ENCODE measurements at regions of chr12 and their contacts with region 1.

Region 1: GRCh38 chr12:75480469-75480949 is at the start of gene GLIPR1:
- DNase-seq: peak; percentile 46 to 91 (median 66)
- ATAC-seq: peak; percentile 74
- H3K4me3 ChIP-seq: peak within 1 kb of the TSS; percentile 65
- H3K4me3 Mint-ChIP-seq: peak within 1 kb of the TSS; percentile 95
- H3K27ac ChIP-seq: peak within 1 kb of the TSS; percentile 76 to 77
- H3K27ac Mint-ChIP-seq: peak within 1 kb of the TSS; percentile 95
- H3K4me1 ChIP-seq: peaks cover 48% of the 10 kb centered on the region
- H3K4me1 Mint-ChIP-seq: peaks cover 85% of the 10 kb centered on the region
- H3K27me3 ChIP-seq: no peaks in the 10 kb centered on the region
- H3K27me3 Mint-ChIP-seq: no peaks in the 10 kb centered on the region
- CTCF ChIP-seq: no peak
- total RNA-seq, gene GLIPR1: 41.3 to 47.7 TPM

Region 2: GRCh38 chr12:75334384-75335030 is 146.0 kb before region 1 on chr12 and contains the start of gene GLIPR1L1:
- CTCF ChIA-PET with region 1: interaction called, 14 read pairs
- POLR2A ChIA-PET with region 1: interaction called, 4 read pairs
- intact Hi-C with region 1: loop called (anchors 5 kb)
- DNase-seq: peak; percentile 67 to 90 (median 78)
- ATAC-seq: peak; percentile 79
- H3K4me3 ChIP-seq: peak within 1 kb of the TSS; percentile 39
- H3K4me3 Mint-ChIP-seq: peak within 1 kb of the TSS; percentile 57
- H3K27ac ChIP-seq: no peak within 1 kb of the TSS
- H3K27ac Mint-ChIP-seq: no peak within 1 kb of the TSS
- H3K4me1 ChIP-seq: peaks cover 17% of the 10 kb centered on the region
- H3K4me1 Mint-ChIP-seq: peaks cover 21% of the 10 kb centered on the region
- H3K27me3 ChIP-seq: peaks cover 12 to 16% of the 10 kb centered on the region in 2 experiments
- H3K27me3 Mint-ChIP-seq: peaks cover 35% of the 10 kb centered on the region
- CTCF ChIP-seq: peak; percentile 90
- total RNA-seq, gene GLIPR1L1: not detected

Region 3: GRCh38 chr12:75437564-75437963 is 42.9 kb before region 1 on chr12:
- CTCF ChIA-PET with region 1: interaction called, 15 read pairs
- POLR2A ChIA-PET with region 1: interaction called, 15 read pairs
- intact Hi-C with region 1: loop called (anchors 5 kb)
- DNase-seq: peak in 5 of 14 experiments; percentile 6 to 79 (median 63)
- ATAC-seq: peak; percentile 78
- H3K4me3 ChIP-seq: no peak overlapping the region
- H3K4me3 Mint-ChIP-seq: no peak overlapping the region
- H3K27ac ChIP-seq: no peak overlapping the region
- H3K27ac Mint-ChIP-seq: no peak overlapping the region
- H3K4me1 ChIP-seq: peaks cover 13% of the 10 kb centered on the region
- H3K4me1 Mint-ChIP-seq: peaks cover 15% of the 10 kb centered on the region
- H3K27me3 ChIP-seq: no peaks in the 10 kb centered on the region
- H3K27me3 Mint-ChIP-seq: peaks cover 14% of the 10 kb centered on the region
- CTCF ChIP-seq: peak; percentile 40

Region 4: DNA sequence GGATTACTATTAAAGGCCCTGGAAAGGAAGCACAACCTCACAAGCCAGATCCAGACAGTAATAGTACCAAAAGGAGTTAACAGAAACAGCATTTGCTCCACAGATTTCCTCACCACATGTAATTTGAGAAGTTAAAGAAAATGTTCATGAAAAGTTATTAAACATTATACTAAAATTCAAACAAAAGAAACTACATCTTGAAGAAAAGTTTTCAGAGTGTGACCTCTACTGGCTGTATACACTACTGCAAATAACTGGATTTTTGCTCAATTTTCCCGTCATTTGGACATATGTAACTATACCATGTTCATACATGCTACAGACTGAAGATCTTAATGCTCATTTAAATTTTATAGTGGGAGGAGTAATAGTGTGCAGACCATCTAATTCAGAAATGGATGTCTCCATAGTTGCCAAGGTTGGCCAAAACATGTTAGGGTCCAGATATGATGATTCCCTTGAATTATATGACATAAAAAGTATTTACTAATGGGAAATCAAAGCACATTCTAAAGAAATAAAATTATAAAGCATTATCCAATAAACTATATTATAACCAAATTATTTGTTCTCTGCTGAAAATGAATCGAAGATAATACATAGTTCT is 25.3 kb after region 1 on chr12:
- CTCF ChIA-PET with region 1: interaction called, 18 read pairs
- POLR2A ChIA-PET with region 1: interaction called, 27 read pairs
- intact Hi-C with region 1: loop called (anchors 2 kb)
- DNase-seq: peak in 3 of 14 experiments; percentile 42 to 57 (median 56)
- ATAC-seq: peak; percentile 69
- H3K4me3 ChIP-seq: no peak overlapping the region
- H3K4me3 Mint-ChIP-seq: no peak overlapping the region
- H3K27ac ChIP-seq: no peak overlapping the region
- H3K27ac Mint-ChIP-seq: peak overlapping the region; percentile 31
- H3K4me1 ChIP-seq: peaks cover 5% of the 10 kb centered on the region
- H3K4me1 Mint-ChIP-seq: peaks cover 28% of the 10 kb centered on the region
- H3K27me3 ChIP-seq: no peaks in the 10 kb centered on the region
- H3K27me3 Mint-ChIP-seq: no peaks in the 10 kb centered on the region
- CTCF ChIP-seq: peak; percentile 72

Region 5: GRCh38 chr12:75933101-75933500 is 452.6 kb after region 1 on chr12:
- CTCF ChIA-PET with region 1: no interaction called
- POLR2A ChIA-PET with region 1: no interaction called
- intact Hi-C with region 1: no loop called
- DNase-seq: no peak
- ATAC-seq: no peak
- H3K4me3 ChIP-seq: no peak overlapping the region
- H3K4me3 Mint-ChIP-seq: no peak overlapping the region
- H3K27ac ChIP-seq: no peak overlapping the region
- H3K27ac Mint-ChIP-seq: no peak overlapping the region
- H3K4me1 ChIP-seq: peaks cover 8% of the 10 kb centered on the region
- H3K4me1 Mint-ChIP-seq: peaks cover 7% of the 10 kb centered on the region
- H3K27me3 ChIP-seq: no peaks in the 10 kb centered on the region
- H3K27me3 Mint-ChIP-seq: no peaks in the 10 kb centered on the region
- CTCF ChIP-seq: no peak

Region 6: DNA sequence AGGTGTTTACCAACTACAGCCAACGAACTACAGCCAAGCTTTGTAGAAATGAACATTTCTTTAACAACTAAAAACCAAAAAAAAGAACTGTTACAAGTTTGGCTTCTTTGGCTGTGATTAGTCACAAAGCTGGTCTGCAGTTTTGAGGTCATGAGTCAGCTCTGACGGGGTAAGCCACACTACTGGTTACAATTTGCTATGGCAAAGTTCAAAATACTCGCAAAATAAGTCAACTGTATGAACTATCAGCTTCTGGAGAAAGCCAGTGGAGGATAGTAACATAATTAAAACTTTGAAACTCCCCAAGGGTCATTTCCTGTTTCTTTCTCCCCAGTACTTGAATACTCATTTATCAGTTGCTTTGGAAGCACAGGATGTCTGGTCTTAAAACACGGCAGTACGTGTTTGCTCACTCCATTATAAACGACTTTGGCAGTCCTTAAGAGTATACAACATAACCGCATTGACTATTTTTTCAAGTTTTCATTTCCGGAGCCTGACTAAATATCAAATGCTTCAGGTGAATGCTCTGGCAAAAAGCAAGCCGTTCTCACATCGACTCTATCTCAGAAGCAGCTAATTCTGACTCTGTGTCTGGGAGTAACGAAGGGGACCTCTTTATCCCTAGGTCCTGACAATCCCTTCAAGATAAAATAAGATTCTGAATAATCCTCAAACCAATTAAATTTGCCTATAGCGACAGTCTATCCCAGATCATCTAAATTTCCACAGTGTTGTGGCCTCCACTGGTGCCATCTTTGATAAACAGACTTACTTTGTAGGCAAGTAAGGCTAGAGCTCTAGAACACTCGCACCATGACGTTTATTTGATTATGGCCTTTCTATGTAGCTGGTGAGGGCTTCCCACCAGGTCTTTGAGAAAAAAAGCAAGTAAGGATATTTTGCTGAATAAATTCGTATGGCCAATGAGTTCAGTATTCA is 540.5 kb after region 1 on chr12:
- CTCF ChIA-PET with region 1: interaction called, 3 read pairs
- POLR2A ChIA-PET with region 1: no interaction called
- intact Hi-C with region 1: loop called in 1 of 2 experiments (anchors 5 kb)
- DNase-seq: peak in 12 of 14 experiments; percentile 34 to 91 (median 50)
- ATAC-seq: peak; percentile 79
- H3K4me3 ChIP-seq: peak overlapping the region; percentile 6
- H3K4me3 Mint-ChIP-seq: peak overlapping the region; percentile 26
- H3K27ac ChIP-seq: peak overlapping the region; percentile 58 to 88
- H3K27ac Mint-ChIP-seq: peak overlapping the region; percentile 89
- H3K4me1 ChIP-seq: peaks cover 26% of the 10 kb centered on the region
- H3K4me1 Mint-ChIP-seq: peaks cover 26% of the 10 kb centered on the region
- H3K27me3 ChIP-seq: no peaks in the 10 kb centered on the region
- H3K27me3 Mint-ChIP-seq: no peaks in the 10 kb centered on the region
- CTCF ChIP-seq: no peak

Region 7: DNA sequence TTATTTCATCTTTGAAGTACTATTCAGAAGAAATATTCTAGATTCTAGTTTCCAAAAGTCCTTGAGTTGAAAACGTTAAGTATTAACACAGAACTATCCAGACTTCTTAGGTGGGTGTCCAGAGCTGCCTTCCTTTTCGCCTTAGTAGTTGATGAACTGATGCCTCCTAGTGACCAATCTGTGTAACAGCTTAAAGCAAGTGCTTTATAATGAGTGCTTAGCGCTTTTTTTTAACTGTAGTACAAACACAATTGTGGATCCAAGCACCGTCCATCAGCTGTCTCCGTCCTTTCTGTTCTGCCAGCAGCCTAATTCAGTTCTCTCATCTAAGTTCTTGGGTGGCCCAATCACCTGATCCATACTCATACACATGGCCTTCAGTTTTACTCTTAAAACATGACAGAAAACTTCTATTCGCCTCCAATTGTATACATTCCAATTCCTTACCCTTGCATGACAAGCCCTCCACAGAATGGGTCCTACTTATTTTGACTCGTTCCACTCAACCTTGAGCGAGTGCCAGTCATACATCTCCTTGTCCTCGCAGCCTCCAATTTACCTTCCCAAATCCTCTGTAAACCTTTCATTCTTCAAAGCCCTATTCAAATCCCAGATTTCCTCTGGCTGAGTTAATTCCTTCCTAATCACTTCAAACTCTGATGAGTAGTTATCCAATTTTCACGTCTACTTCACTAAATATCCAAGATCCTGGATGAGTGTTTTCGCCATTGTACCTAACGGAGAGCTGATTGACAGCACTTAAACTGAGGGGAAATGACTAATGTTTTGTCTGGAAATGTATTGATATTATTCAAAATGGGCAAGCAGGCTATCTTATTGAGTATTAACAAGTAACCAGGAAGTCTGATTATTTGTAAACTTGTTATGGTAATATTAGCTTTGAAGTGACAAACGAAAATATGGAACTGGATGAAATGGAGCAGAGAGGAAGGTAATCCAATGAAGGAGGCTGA is 556.9 kb after region 1 on chr12:
- CTCF ChIA-PET with region 1: interaction called, 4 read pairs
- POLR2A ChIA-PET with region 1: interaction called, 19 read pairs
- intact Hi-C with region 1: loop called in 1 of 2 experiments (anchors 5 kb)
- DNase-seq: peak in 5 of 14 experiments; percentile 16 to 82 (median 75)
- ATAC-seq: peak; percentile 92
- H3K4me3 ChIP-seq: no peak overlapping the region
- H3K4me3 Mint-ChIP-seq: no peak overlapping the region
- H3K27ac ChIP-seq: no peak overlapping the region
- H3K27ac Mint-ChIP-seq: no peak overlapping the region
- H3K4me1 ChIP-seq: peaks cover 9% of the 10 kb centered on the region
- H3K4me1 Mint-ChIP-seq: peaks cover 14% of the 10 kb centered on the region
- H3K27me3 ChIP-seq: no peaks in the 10 kb centered on the region
- H3K27me3 Mint-ChIP-seq: no peaks in the 10 kb centered on the region
- CTCF ChIP-seq: peak; percentile 85

Measured in CD4-positive, alpha-beta T cell (primary cell).